H1 (cell line): ENCODE measurements at regions of chr7 and their contacts with region 1.

Region 1: GRCh38 chr7:106041140-106041717 is 70.9 kb downstream of the SYPL1 start:
- DNase-seq: peak in 1 of 2 experiments; percentile 80
- H3K4me3 ChIP-seq: no peak overlapping the region
- H3K27ac ChIP-seq: no peak overlapping the region
- H3K4me1 ChIP-seq: peaks cover 0 to 7% (median 0%) of the 10 kb centered on the region in 4 experiments; a peak in 3 of 7 replicates
- H3K27me3 ChIP-seq: no peaks in the 10 kb centered on the region
- CTCF ChIP-seq: peak; percentile 76 to 98 (median 89)
- EP300 ChIP-seq: no peak
- POLR2A ChIP-seq: no peak
- RAD21 ChIP-seq: peak; percentile 55 to 65

Region 2: GRCh38 chr7:105638902-105639495 is 402.2 kb before region 1 on chr7:
- CTCF ChIA-PET with region 1: interaction called, 19 read pairs
- POLR2A ChIA-PET with region 1: no interaction called
- DNase-seq: peak; percentile 80 to 81
- H3K4me3 ChIP-seq: peak overlapping the region; percentile 25 to 67 (median 59); a peak in 7 of 8 replicates
- H3K27ac ChIP-seq: peak overlapping the region; percentile 94
- H3K4me1 ChIP-seq: peaks cover 31 to 65% (median 39%) of the 10 kb centered on the region in 4 experiments
- H3K27me3 ChIP-seq: no peaks in the 10 kb centered on the region
- CTCF ChIP-seq: no peak
- EP300 ChIP-seq: peak in 1 of 2 experiments; percentile 74; a peak in 1 of 3 replicates
- POLR2A ChIP-seq: peak; percentile 17 to 43
- RAD21 ChIP-seq: no peak

Region 3: DNA sequence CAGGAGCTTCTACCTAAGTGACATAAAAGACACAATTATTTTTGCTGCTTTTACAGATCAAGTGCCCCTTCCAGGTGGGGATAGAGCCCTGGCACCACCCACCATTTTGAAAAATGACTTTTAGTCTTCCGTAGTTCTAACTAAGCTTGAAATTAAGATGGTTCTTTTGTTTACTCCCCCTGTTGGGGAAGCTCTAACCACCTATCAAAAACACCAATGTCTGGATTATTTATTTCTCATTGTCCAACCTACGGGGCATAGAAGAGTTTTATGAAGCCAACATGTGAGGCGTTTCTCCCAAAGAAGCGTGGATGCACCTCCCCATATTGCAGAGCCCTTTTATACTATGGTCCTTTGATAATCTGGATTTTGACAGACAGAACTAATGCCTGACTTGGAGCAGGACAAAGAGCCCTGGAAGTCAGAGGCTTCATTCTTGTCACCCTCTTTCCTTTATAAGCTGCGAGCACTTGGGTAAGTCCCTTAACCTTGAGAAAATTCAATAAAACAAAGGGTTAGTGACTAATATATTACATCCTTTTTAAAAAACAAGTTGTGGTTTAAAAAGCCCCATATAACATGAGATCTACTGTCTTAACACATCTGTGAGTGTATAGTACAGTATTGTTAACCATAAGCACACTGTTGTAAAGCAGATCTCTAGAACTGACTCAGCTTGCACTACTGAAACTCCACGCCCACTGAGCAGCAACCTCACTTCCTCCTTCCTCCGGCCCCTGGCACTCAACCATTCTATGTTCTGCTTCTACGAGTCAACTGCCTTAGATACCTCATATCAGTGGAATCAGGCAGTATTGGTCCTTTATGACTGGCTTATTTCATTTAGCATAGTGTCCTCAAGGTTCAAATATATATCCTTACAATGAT is 232.3 kb before region 1 on chr7:
- CTCF ChIA-PET with region 1: interaction called, 12 read pairs
- POLR2A ChIA-PET with region 1: no interaction called
- DNase-seq: no peak
- H3K4me3 ChIP-seq: no peak overlapping the region
- H3K27ac ChIP-seq: no peak overlapping the region
- H3K4me1 ChIP-seq: peaks cover 6 to 14% (median 9%) of the 10 kb centered on the region in 4 experiments; a peak in 5 of 7 replicates
- H3K27me3 ChIP-seq: no peaks in the 10 kb centered on the region
- CTCF ChIP-seq: no peak
- EP300 ChIP-seq: no peak
- POLR2A ChIP-seq: no peak
- RAD21 ChIP-seq: no peak

Region 4: GRCh38 chr7:105885387-105886111 is 155.7 kb before region 1 on chr7:
- CTCF ChIA-PET with region 1: interaction called, 11 read pairs
- POLR2A ChIA-PET with region 1: no interaction called
- DNase-seq: no peak
- H3K4me3 ChIP-seq: no peak overlapping the region
- H3K27ac ChIP-seq: no peak overlapping the region
- H3K4me1 ChIP-seq: peaks cover 0 to 4% (median 1%) of the 10 kb centered on the region in 4 experiments; a peak in 2 of 7 replicates
- H3K27me3 ChIP-seq: no peaks in the 10 kb centered on the region
- CTCF ChIP-seq: no peak
- EP300 ChIP-seq: no peak
- POLR2A ChIP-seq: no peak
- RAD21 ChIP-seq: no peak

Region 5: GRCh38 chr7:105963038-105963667 is 78.1 kb before region 1 on chr7 and contains the start of gene CDHR3:
- CTCF ChIA-PET with region 1: interaction called, 11 read pairs
- POLR2A ChIA-PET with region 1: no interaction called
- DNase-seq: no peak
- H3K4me3 ChIP-seq: no peak within 1 kb of the TSS
- H3K27ac ChIP-seq: no peak within 1 kb of the TSS
- H3K4me1 ChIP-seq: peaks cover 5 to 12% (median 8%) of the 10 kb centered on the region in 4 experiments; a peak in 4 of 7 replicates
- H3K27me3 ChIP-seq: no peaks in the 10 kb centered on the region
- CTCF ChIP-seq: no peak
- EP300 ChIP-seq: no peak
- POLR2A ChIP-seq: no peak
- RAD21 ChIP-seq: no peak
- total RNA-seq, gene CDHR3: 5.9 and 6.4 TPM in 2 replicates

Region 6: GRCh38 chr7:106022193-106022821 is 18.9 kb before region 1 on chr7:
- CTCF ChIA-PET with region 1: interaction called, 265 read pairs
- POLR2A ChIA-PET with region 1: no interaction called
- DNase-seq: no peak
- H3K4me3 ChIP-seq: no peak overlapping the region
- H3K27ac ChIP-seq: no peak overlapping the region
- H3K4me1 ChIP-seq: peaks cover 5 to 11% (median 6%) of the 10 kb centered on the region in 4 experiments; a peak in 6 of 7 replicates
- H3K27me3 ChIP-seq: no peaks in the 10 kb centered on the region
- CTCF ChIP-seq: no peak
- EP300 ChIP-seq: no peak
- POLR2A ChIP-seq: no peak
- RAD21 ChIP-seq: no peak

Region 7: GRCh38 chr7:106190589-106191330 is 149.5 kb after region 1 on chr7:
- CTCF ChIA-PET with region 1: no interaction called
- POLR2A ChIA-PET with region 1: no interaction called
- DNase-seq: no peak
- H3K4me3 ChIP-seq: no peak overlapping the region
- H3K27ac ChIP-seq: no peak overlapping the region
- H3K4me1 ChIP-seq: no peaks in the 10 kb centered on the region
- H3K27me3 ChIP-seq: no peaks in the 10 kb centered on the region
- CTCF ChIP-seq: no peak
- EP300 ChIP-seq: no peak
- POLR2A ChIP-seq: no peak
- RAD21 ChIP-seq: no peak